A549 (cell line): ENCODE measurements at regions of chr17 and their contacts with region 1.

Region 1: DNA sequence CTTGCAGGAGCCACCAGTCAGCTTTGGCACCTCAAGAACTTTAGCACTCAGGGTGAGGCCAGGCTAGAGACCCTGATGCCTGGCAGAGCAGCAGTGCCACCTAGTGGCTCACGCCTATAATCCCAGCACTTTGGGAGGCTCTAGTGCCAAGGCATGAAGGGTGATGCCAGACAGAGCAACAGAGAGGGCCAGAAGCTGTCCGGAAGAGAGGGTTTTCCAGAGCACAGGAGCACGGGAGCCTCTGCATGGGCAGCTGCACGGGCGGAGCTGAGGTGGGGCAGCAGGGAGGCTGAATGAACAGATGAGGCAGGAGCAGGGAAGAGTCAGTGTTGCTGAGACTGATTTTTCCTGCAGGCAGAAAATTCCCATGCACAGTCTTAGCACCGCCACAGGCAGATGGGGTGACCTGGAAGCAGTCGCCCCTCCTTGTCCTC is 38.9 kb downstream of the MYH3 start:
- DNase-seq: peak; percentile 85 to 87
- ATAC-seq: peak; percentile 91 to 95
- H3K4me3 ChIP-seq: no peak overlapping the region
- H3K27ac ChIP-seq: peak overlapping the region; percentile 41 to 43; a peak in 3 of 6 replicates
- H3K4me1 ChIP-seq: peaks cover 17% of the 10 kb centered on the region; the same call in 1 of the 3 replicates
- CTCF ChIP-seq: peak; percentile 95
- EP300 ChIP-seq: no peak
- POLR2A ChIP-seq: no peak
- RAD21 ChIP-seq: peak; percentile 82 to 90

Region 2: GRCh38 chr17:9971991-9972599 is 646.1 kb before region 1 on chr17:
- CTCF ChIA-PET with region 1: interaction called, 72 read pairs
- POLR2A ChIA-PET with region 1: no interaction called
- DNase-seq: peak in 1 of 2 experiments; percentile 24
- ATAC-seq: peak; percentile 48 to 66; a peak in 3 of 6 replicates
- H3K4me3 ChIP-seq: no peak overlapping the region
- H3K27ac ChIP-seq: no peak overlapping the region
- H3K4me1 ChIP-seq: peaks cover 21% of the 10 kb centered on the region
- CTCF ChIP-seq: no peak
- EP300 ChIP-seq: no peak
- POLR2A ChIP-seq: no peak
- RAD21 ChIP-seq: no peak

Region 3: GRCh38 chr17:10309003-10309834 is 309.0 kb before region 1 on chr17:
- CTCF ChIA-PET with region 1: interaction called, 614 read pairs
- POLR2A ChIA-PET with region 1: no interaction called
- DNase-seq: no peak
- ATAC-seq: peak in 1 of 2 experiments; percentile 14; a peak in 1 of 6 replicates
- H3K4me3 ChIP-seq: no peak overlapping the region
- H3K27ac ChIP-seq: no peak overlapping the region
- H3K4me1 ChIP-seq: no peaks in the 10 kb centered on the region
- CTCF ChIP-seq: no peak
- EP300 ChIP-seq: no peak
- POLR2A ChIP-seq: no peak
- RAD21 ChIP-seq: no peak

Region 4: DNA sequence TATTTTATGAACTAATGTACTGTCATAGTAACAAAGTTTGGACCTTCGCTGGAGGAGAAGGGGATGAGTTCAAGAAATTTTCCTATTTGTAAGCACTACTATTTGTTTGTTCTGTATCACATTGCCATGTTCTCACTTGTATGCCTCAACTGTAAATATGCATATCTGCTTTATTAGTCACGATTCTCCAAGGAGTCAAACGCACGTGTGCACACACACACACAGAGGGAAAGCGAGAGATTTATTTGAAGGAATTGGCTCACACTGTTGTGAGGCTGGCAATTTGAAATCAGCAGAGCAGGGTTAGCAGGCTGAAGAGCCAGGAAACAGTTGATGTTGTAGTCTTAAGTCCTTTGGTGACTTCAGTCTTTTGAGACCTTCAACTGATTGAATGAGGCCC is 43.9 kb before region 1 on chr17:
- CTCF ChIA-PET with region 1: interaction called, 12 read pairs
- POLR2A ChIA-PET with region 1: no interaction called
- DNase-seq: no peak
- ATAC-seq: no peak
- H3K4me3 ChIP-seq: no peak overlapping the region
- H3K27ac ChIP-seq: no peak overlapping the region
- H3K4me1 ChIP-seq: no peaks in the 10 kb centered on the region
- CTCF ChIP-seq: no peak
- EP300 ChIP-seq: no peak
- POLR2A ChIP-seq: no peak
- RAD21 ChIP-seq: no peak

Region 5: GRCh38 chr17:10631048-10631700 is 13.0 kb after region 1 on chr17:
- CTCF ChIA-PET with region 1: interaction called, 315 read pairs
- POLR2A ChIA-PET with region 1: no interaction called
- DNase-seq: peak; percentile 43 to 44
- ATAC-seq: peak; percentile 63 to 91; a peak in 3 of 6 replicates
- H3K4me3 ChIP-seq: no peak overlapping the region
- H3K27ac ChIP-seq: no peak overlapping the region
- H3K4me1 ChIP-seq: no peaks in the 10 kb centered on the region
- CTCF ChIP-seq: peak; percentile 79
- EP300 ChIP-seq: no peak
- POLR2A ChIP-seq: no peak
- RAD21 ChIP-seq: peak; percentile 40 to 60; a peak in 3 of 5 replicates

Region 6: GRCh38 chr17:10652984-10653659 is 34.9 kb after region 1 on chr17:
- CTCF ChIA-PET with region 1: interaction called, 194 read pairs
- POLR2A ChIA-PET with region 1: no interaction called
- DNase-seq: no peak
- ATAC-seq: no peak; a peak in 1 of 6 replicates
- H3K4me3 ChIP-seq: no peak overlapping the region
- H3K27ac ChIP-seq: no peak overlapping the region
- H3K4me1 ChIP-seq: no peaks in the 10 kb centered on the region
- CTCF ChIP-seq: no peak
- EP300 ChIP-seq: no peak
- POLR2A ChIP-seq: no peak
- RAD21 ChIP-seq: no peak

Region 7: GRCh38 chr17:10702574-10702973 is 84.4 kb after region 1 on chr17:
- CTCF ChIA-PET with region 1: no interaction called
- POLR2A ChIA-PET with region 1: no interaction called
- DNase-seq: no peak
- ATAC-seq: no peak
- H3K4me3 ChIP-seq: no peak overlapping the region
- H3K27ac ChIP-seq: no peak overlapping the region
- H3K4me1 ChIP-seq: no peaks in the 10 kb centered on the region
- CTCF ChIP-seq: no peak
- EP300 ChIP-seq: no peak
- POLR2A ChIP-seq: no peak
- RAD21 ChIP-seq: no peak

Region 8: GRCh38 chr17:10992106-10992880 is 374.1 kb after region 1 on chr17:
- CTCF ChIA-PET with region 1: no interaction called
- POLR2A ChIA-PET with region 1: no interaction called
- DNase-seq: no peak
- ATAC-seq: no peak
- H3K4me3 ChIP-seq: no peak overlapping the region
- H3K27ac ChIP-seq: no peak overlapping the region
- H3K4me1 ChIP-seq: no peaks in the 10 kb centered on the region
- CTCF ChIP-seq: no peak
- EP300 ChIP-seq: no peak
- POLR2A ChIP-seq: no peak
- RAD21 ChIP-seq: no peak